GM13976 (cell line): ENCODE measurements at regions of chr18 and their contacts with region 1.

Region 1: GRCh38 chr18:36942264-36942663 is 113.3 kb downstream of the KIAA1328 start:
- DNase-seq: peak; percentile 61
- CTCF ChIP-seq: peak; percentile 56

Region 2: GRCh38 chr18:36499938-36500337 is 442.3 kb before region 1 on chr18:
- in situ Hi-C with region 1: no loop called
- DNase-seq: peak; percentile 37
- CTCF ChIP-seq: no peak

Region 3: GRCh38 chr18:37476182-37476581 is 533.9 kb after region 1 on chr18:
- in situ Hi-C with region 1: loop called (anchors 25 kb)
- DNase-seq: peak; percentile 67
- CTCF ChIP-seq: peak; percentile 27